ENCODE measurements at regions of chr19 and their contacts with region 1.

Region 1: DNA sequence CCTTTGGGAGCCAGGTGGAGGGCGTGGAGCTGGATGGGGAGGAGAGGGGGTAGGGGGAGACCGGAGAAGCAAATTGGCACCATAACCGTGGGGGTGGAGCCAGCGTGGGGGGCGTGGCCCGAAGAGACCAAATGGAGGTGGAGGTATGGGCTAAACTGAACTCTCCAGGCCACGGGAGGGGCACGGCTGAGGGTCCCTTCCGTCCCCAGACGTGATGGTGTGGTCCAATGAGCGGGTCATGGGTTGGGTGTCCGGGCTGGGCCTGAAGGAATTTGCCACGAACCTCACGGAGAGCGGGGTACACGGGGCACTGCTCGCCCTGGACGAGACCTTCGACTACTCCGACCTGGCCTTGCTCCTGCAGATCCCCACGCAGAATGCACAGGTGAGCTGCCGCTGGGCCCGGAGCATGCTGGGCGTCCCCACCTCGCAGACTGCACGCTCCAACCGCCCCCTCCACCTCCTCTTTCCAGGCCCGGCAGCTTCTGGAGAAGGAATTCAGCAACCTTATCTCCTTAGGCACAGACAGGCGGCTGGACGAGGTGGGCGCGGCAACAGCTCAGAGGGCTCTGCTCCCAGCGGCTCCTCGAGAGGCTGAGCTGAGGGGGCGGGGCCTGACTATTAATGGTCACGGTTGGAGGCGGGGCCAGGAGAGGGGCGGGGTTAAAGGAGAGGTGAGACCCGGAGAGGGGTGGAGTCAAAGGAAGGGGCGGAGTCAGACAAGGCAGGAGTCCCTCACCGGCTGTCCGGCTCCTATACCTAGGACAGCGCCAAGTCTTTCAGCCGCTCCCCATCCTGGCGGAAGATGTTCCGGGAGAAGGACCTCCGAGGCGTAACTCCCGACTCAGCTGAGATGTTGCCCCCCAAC is 6.2 kb downstream of the HRC start:
- DNase-seq: peak; percentile 86
- ATAC-seq: peak; percentile 45
- H3K4me3 Mint-ChIP-seq: peak overlapping the region; percentile 73
- H3K27ac Mint-ChIP-seq: no peak overlapping the region
- H3K4me1 Mint-ChIP-seq: peaks cover 40% of the 10 kb centered on the region
- H3K27me3 Mint-ChIP-seq: peaks cover 60% of the 10 kb centered on the region

Region 2: GRCh38 chr19:48926909-48927308 is 222.1 kb before region 1 on chr19:
- CTCF ChIA-PET with region 1: no interaction called
- POLR2A ChIA-PET with region 1: no interaction called
- DNase-seq: no peak
- ATAC-seq: no peak
- H3K4me3 Mint-ChIP-seq: no peak overlapping the region
- H3K27ac Mint-ChIP-seq: no peak overlapping the region
- H3K4me1 Mint-ChIP-seq: peaks cover 3% of the 10 kb centered on the region
- H3K27me3 Mint-ChIP-seq: no peaks in the 10 kb centered on the region

Region 3: GRCh38 chr19:49113762-49114629 is 35.0 kb before region 1 on chr19 and contains the start of gene LIN7B:
- CTCF ChIA-PET with region 1: interaction called, 11 read pairs
- POLR2A ChIA-PET with region 1: no interaction called
- DNase-seq: peak; percentile 76
- ATAC-seq: peak; percentile 77
- H3K4me3 Mint-ChIP-seq: peak within 1 kb of the TSS; percentile 80
- H3K27ac Mint-ChIP-seq: peak within 1 kb of the TSS; percentile 75
- H3K4me1 Mint-ChIP-seq: peaks cover 32% of the 10 kb centered on the region
- H3K27me3 Mint-ChIP-seq: no peaks in the 10 kb centered on the region
- total RNA-seq, gene LIN7B: 3.7 to 6.3 TPM

Region 4: DNA sequence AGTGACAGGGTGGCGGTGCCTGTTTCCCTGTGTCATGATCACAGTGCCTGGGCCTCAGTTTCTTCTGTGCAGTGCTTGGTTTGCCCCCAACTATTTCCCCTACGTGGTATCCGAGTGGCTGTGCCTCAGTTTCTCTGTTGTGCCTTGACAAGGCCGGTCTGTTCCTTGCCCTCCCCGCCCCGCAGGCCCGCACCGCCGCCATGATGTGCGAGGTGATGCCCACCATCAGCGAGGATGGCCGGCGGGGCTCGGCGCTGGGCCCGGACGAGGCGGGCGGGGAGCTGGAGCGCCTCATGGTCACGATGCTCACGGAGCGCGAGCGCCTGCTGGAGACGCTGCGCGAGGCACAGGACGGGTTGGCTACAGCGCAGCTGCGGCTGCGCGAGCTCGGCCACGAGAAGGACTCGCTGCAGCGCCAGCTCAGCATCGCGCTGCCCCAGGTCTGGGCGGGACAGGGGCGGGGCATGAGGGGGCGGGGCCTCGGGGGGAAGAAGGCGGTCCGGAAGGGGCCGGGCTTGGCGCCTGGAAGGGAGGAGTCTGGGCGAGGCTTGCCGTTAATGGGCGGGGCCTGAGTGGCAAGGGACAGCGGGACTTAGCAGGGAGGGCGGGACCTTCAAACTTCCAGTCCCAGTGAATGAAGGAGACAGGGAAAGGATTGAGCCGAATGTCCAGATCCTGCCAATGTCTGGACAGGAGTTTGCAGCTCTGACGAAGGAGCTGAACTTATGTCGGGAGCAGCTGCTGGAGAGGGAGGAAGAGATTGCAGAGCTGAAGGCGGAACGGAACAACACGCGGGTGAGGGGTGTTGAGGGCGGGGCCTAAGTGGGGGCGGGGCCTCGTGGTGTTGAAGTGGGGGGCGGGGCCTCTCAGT is 21.1 kb before region 1 on chr19:
- CTCF ChIA-PET with region 1: interaction called, 24 read pairs
- POLR2A ChIA-PET with region 1: no interaction called
- DNase-seq: peak; percentile 95
- ATAC-seq: peak; percentile 97
- H3K4me3 Mint-ChIP-seq: peak overlapping the region; percentile 83
- H3K27ac Mint-ChIP-seq: peak overlapping the region; percentile 87
- H3K4me1 Mint-ChIP-seq: peaks cover 15% of the 10 kb centered on the region
- H3K27me3 Mint-ChIP-seq: peaks cover 3% of the 10 kb centered on the region

Region 5: DNA sequence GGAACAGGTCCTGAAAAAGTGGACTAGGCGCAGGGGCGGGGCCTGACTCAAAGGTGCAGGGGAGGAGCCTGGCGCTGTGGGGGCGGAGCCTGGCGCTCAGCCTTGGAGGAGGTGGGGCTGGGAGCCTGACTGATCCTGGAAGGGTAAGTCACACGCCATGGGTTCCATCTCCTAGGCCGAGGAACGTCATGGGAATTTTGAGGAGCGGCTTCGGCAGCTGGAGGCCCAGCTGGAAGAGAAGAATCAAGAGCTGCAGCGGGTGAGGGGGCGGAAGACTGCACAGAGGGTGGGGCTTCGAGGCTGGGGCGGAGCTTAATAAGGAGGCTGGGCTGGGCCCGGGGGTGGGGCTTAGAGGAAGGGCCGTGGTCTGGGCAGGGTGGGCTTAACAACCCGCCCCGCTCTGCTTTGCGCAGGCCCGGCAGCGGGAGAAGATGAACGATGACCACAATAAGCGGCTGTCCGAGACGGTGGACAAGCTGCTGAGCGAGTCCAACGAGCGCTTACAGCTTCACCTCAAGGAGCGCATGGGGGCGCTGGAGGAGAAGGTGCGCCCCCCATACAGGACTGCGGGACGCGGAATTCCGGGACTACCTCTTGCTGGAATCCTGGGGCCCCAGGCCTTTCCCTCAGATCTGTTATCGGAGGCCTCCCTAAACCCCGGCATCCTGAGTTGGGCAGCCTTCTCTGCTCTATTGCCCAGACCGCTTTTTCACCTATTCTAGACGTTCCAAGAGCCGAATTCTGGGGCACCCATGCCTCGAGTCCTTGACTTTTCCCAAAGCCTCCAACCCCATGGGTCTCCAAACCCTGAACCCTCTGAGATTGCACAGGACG is 15.2 kb before region 1 on chr19:
- CTCF ChIA-PET with region 1: interaction called, 24 read pairs
- POLR2A ChIA-PET with region 1: no interaction called
- DNase-seq: peak; percentile 56
- ATAC-seq: peak; percentile 70
- H3K4me3 Mint-ChIP-seq: peak overlapping the region; percentile 61
- H3K27ac Mint-ChIP-seq: no peak overlapping the region
- H3K4me1 Mint-ChIP-seq: peaks cover 18% of the 10 kb centered on the region
- H3K27me3 Mint-ChIP-seq: peaks cover 12% of the 10 kb centered on the region

Region 6: DNA sequence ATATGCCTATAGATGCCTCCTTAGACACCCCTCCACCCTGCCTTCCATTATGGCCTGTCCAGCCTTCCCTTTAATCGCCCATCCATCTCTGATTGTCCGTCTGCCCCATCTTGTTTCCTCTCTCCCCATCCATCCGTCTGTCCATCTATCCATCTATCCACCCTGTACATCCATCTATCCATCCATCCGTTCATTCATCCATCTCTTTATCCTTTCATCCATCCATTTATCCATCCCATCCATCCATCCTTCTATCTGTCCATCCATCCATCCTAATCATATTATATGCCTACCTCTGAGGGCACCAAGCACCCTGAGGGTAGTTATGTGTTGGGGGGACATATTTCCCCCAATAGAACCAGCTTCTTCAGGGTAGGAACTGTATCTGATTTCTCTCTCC is 31.6 kb after region 1 on chr19:
- CTCF ChIA-PET with region 1: no interaction called
- POLR2A ChIA-PET with region 1: no interaction called
- DNase-seq: no peak
- ATAC-seq: no peak
- H3K4me3 Mint-ChIP-seq: no peak overlapping the region
- H3K27ac Mint-ChIP-seq: no peak overlapping the region
- H3K4me1 Mint-ChIP-seq: peaks cover 4% of the 10 kb centered on the region
- H3K27me3 Mint-ChIP-seq: no peaks in the 10 kb centered on the region

Measured in activated CD8-positive, alpha-beta T cell treated with anti-CD3 and anti-CD28 coated beads, Interleukin-2, amount 10 ng/mL, durations not matched to agents 7 days and 5 days (primary cell).